Activated naive CD4-positive, alpha-beta T cell treated with anti-CD3 and anti-CD28 coated beads for 36 hours (primary cell): ENCODE measurements at regions of chr15 and their contacts with region 1.

Region 1: GRCh38 chr15:52568601-52569256 is at the start of gene ARPP19:
- DNase-seq: peak; percentile 90
- H3K4me3 Mint-ChIP-seq: peak within 1 kb of the TSS; percentile 86
- H3K27ac Mint-ChIP-seq: peak within 1 kb of the TSS; percentile 98
- H3K4me1 Mint-ChIP-seq: peaks cover 23% of the 10 kb centered on the region
- H3K27me3 Mint-ChIP-seq: no peaks in the 10 kb centered on the region
- total RNA-seq, gene ARPP19: 130 to 144 TPM

Region 2: DNA sequence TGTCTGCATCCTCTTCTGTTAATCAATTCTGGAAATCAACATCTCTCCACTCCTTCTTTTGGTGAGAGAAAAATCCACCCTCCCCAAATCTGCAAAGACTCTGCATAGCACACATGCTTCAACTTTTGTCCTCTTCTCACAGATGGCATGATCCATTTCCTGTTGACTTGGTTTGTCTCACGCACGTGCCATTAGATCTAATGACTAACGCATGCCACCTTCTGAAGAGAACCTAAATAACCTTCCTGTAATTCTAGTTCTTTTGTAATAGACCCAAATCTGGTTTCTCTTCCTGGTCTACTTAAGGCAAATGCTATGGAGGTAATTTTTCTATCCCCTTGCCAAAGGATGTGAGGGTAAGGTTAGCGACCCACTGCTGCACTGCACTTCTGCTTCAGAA is 161.4 kb after region 1 on chr15:
- CTCF ChIA-PET with region 1: interaction called, 3 read pairs
- intact Hi-C with region 1: loop called (anchors 2 kb)
- DNase-seq: peak; percentile 73
- H3K4me3 Mint-ChIP-seq: no peak overlapping the region
- H3K27ac Mint-ChIP-seq: peak overlapping the region; percentile 57
- H3K4me1 Mint-ChIP-seq: peaks cover 38% of the 10 kb centered on the region
- H3K27me3 Mint-ChIP-seq: no peaks in the 10 kb centered on the region